ENCODE measurements at regions of chr1 and their contacts with region 1.

Region 1: GRCh38 chr1:89804642-89805237 is 16.1 kb upstream of the LRRC8D start:
- DNase-seq: peak; percentile 87 to 91 (median 90)
- ATAC-seq: peak; percentile 96
- H3K4me3 ChIP-seq: no peak overlapping the region
- H3K27ac ChIP-seq: no peak overlapping the region
- H3K4me1 ChIP-seq: no peaks in the 10 kb centered on the region
- H3K27me3 ChIP-seq: no peaks in the 10 kb centered on the region
- CTCF ChIP-seq: peak; percentile 76 to 93 (median 87)
- POLR2A ChIP-seq: no peak

Region 2: DNA sequence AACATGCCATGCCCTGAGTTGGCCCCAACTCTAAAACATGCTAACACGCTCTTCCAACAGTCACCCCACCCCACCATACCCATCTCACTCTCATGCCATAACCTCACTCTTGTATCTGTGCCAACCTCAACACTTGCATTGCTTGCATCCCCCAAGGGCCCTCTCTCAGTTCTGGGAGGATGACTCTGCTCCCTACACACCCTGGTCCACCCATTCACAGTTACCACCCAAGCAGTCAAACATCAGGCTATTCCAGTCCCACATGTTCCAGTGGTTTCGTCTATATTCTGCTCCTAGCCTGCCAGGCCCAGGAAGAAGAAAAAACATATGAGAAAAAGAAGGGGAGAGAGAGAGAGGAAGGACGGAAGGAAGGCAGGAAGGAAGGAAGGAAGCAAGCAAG is 409.9 kb before region 1 on chr1:
- intact Hi-C with region 1: no loop called
- DNase-seq: no peak
- ATAC-seq: no peak
- H3K4me3 ChIP-seq: no peak overlapping the region
- H3K27ac ChIP-seq: no peak overlapping the region
- H3K4me1 ChIP-seq: no peaks in the 10 kb centered on the region
- H3K27me3 ChIP-seq: no peaks in the 10 kb centered on the region
- CTCF ChIP-seq: no peak
- POLR2A ChIP-seq: no peak

Region 3: GRCh38 chr1:89855413-89856123 is 50.8 kb after region 1 on chr1:
- intact Hi-C with region 1: no loop called
- DNase-seq: no peak
- ATAC-seq: no peak
- H3K4me3 ChIP-seq: no peak overlapping the region
- H3K27ac ChIP-seq: no peak overlapping the region
- H3K4me1 ChIP-seq: no peaks in the 10 kb centered on the region
- H3K27me3 ChIP-seq: no peaks in the 10 kb centered on the region
- CTCF ChIP-seq: no peak
- POLR2A ChIP-seq: no peak

Region 4: DNA sequence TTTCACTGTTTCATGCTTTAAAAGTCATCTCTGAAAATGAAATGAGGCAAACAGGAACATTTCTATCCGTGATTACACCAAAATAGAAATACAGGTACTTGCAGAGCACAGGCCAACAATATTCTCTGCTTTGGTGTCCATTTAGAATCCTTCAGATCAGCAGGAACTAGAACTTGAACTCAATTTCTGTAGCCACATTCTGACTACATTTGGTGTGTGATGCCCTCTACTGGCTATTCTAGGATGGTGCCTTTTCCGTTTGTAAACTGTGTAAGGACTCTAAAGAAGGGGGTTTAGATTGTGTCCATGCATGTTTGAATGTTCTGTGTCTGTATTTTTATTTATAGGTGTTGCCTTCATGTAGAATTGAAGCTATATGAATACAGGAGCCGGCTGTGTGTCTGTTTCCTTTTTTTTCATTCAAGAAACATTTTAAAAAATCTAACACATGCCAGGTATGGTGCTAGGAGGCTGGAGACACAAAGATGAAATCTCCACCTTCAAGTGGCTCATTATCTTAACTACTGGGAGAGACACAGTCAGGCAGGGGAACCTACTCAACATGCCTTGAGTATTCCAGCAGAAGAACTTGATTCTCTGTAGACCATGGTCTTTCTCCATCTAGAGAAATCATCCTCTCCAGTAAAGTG is 182.6 kb after region 1 on chr1:
- intact Hi-C with region 1: loop called (anchors 5 kb)
- DNase-seq: peak; percentile 60 to 77 (median 66)
- ATAC-seq: peak; percentile 95
- H3K4me3 ChIP-seq: no peak overlapping the region
- H3K27ac ChIP-seq: no peak overlapping the region
- H3K4me1 ChIP-seq: no peaks in the 10 kb centered on the region
- H3K27me3 ChIP-seq: no peaks in the 10 kb centered on the region
- CTCF ChIP-seq: peak; percentile 64 to 90 (median 88)
- POLR2A ChIP-seq: no peak